Motor neuron (in vitro differentiated cells): ENCODE measurements at regions of chr22 and their contacts with region 1.

Region 1: DNA sequence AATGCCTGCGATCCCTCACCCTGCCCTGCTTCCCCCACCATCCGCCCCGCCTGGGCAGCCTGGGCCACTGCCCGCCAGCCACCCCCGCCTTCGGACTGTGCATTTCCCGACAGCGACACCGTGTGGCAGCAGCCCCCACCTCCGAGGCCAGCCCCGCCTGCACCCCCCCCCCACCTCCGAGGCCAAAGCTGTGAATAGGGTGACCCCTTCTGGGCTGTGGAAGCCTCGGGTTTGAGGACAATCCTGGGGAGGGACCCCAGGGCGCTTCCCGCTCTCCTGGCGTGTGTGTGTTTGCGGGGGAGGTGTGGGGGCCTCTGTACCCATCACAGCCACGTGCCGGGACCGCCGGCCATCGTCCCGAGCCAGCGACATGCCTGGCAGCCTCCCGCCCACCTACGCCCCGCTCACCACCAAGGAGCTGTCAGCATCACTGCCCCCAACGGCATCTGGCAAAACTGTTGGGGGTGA is 33.8 kb upstream of the PPARA start:
- ATAC-seq: peak; percentile 46 to 85 (median 76)
- H3K4me3 ChIP-seq: no peak overlapping the region
- H3K27ac ChIP-seq: no peak overlapping the region
- H3K4me1 ChIP-seq: peaks cover 10 to 14% of the 10 kb centered on the region in 2 donors

Region 2: GRCh38 chr22:45867118-45867905 is 249.2 kb before region 1 on chr22:
- in situ Hi-C with region 1: no loop called
- ATAC-seq: peak in 7 of 8 experiments; percentile 22 to 88 (median 72)
- H3K4me3 ChIP-seq: peak overlapping the region in 1 of 5 donors; percentile 3
- H3K27ac ChIP-seq: no peak overlapping the region
- H3K4me1 ChIP-seq: peaks cover 15 to 31% of the 10 kb centered on the region in 2 donors

Region 3: GRCh38 chr22:45994491-45995404 is 121.8 kb before region 1 on chr22:
- in situ Hi-C with region 1: loop called in 1 of 9 experiments (anchors 10 kb)
- ATAC-seq: peak; percentile 16 to 90 (median 61)
- H3K4me3 ChIP-seq: no peak overlapping the region
- H3K27ac ChIP-seq: no peak overlapping the region
- H3K4me1 ChIP-seq: peaks cover 0 to 9% of the 10 kb centered on the region in 2 donors

Region 4: GRCh38 chr22:46006379-46007002 is 110.0 kb before region 1 on chr22:
- in situ Hi-C with region 1: loop called in 6 of 9 experiments (anchors 10 to 25 kb)
- ATAC-seq: peak; percentile 58 to 91 (median 77)
- H3K4me3 ChIP-seq: no peak overlapping the region
- H3K27ac ChIP-seq: no peak overlapping the region
- H3K4me1 ChIP-seq: peaks cover 4 to 5% of the 10 kb centered on the region in 2 donors

Region 5: DNA sequence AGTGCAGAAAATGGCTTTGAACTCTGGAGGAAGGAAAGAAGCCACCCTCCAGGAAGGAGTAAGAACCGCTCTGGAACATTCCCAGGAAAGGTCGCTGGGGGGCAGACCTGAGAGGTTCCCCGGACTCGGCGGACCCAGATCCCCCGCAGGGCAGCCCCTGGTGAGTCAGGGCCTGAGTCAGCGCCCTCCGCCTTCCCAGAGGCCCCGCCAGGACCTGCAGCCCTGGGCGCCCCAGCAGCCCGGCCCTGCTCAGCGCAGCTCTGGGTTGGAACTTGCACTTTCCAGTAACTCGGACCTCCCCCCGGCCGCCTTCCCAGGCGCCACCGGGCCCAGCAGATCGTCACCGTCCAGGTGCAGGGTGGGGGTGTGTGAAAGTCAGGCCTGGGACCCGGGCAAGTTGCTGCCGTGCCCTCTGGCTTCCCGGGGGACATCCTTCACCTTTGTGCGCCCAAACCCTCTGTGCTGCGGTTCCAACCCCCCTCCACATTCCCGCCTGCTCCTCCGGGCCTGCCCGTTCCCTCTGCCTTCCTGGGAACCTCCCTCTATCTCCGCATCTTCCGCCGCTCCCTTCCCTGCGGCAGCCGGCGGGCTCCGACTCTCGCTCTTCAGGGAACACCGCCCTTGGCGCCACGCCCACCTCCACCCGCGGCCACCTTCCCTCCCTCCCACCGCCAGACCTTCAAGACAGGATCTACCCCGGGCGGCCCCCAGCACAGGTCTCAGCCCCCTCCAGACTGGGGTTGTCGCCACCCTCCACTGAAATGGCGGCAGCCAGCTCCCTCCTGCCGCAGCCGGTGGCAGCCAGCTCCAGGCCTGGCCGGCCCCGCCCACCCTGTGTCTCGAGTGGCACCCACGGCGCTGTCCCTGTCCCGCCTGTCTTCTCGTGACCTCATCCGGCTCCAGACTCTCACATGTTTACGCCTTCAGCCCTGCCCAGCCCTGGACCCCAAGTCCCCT is 102.8 kb before region 1 on chr22:
- in situ Hi-C with region 1: loop called in 6 of 9 experiments (anchors 10 to 25 kb)
- ATAC-seq: peak; percentile 92 to 97 (median 95)
- H3K4me3 ChIP-seq: peak overlapping the region; percentile 25 to 41 (median 31)
- H3K27ac ChIP-seq: peak overlapping the region; percentile 3 to 76
- H3K4me1 ChIP-seq: peaks cover 3 to 5% of the 10 kb centered on the region in 2 donors

Region 6: DNA sequence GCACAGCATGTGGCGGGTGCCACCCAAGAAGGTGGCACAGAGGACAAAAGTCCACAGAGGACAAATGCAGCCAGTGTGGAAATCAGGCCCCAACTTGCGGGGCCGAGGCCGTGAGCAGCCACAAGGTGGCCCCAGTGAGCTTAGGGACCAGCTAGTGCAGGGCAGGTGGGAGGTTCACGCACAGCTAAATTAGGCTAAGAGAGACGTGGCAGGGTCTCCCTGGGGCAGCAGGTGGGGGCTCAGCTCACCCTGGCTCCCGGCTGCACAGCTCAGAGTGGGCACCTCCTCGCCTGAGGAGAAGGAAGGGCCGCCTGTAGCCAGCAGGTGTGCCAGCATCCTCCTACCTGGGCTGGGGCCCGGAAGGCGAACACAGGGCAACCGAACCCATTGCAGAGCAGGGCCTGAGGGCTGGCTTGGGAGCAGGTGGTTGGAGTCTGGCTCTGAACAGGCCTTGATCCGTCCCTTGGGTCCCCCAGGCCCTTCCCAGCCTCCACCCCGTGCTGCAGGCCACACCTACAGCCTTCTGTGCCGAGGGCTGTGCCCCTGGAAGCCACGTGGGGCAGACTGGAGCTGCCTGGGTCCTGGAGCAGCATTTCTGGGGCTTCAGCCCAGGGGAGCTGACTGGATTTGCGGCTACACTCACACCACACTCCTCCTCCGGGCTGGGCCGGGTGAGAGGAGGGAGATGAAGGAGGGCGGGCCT is 447.0 kb after region 1 on chr22:
- in situ Hi-C with region 1: loop called in 1 of 9 experiments (anchors 25 kb)
- ATAC-seq: peak; percentile 76 to 92 (median 86)
- H3K4me3 ChIP-seq: no peak overlapping the region
- H3K27ac ChIP-seq: peak overlapping the region; percentile 44 to 82
- H3K4me1 ChIP-seq: peaks cover 18 to 29% of the 10 kb centered on the region in 2 donors